ENCODE measurements at regions of chr15 and their contacts with region 1.

Region 1: GRCh38 chr15:66851226-66852071 is 149.4 kb downstream of the SMAD6 start:
- DNase-seq: peak; percentile 70
- ATAC-seq: peak; percentile 96
- H3K4me3 ChIP-seq: no peak overlapping the region
- H3K27ac ChIP-seq: peak overlapping the region; percentile 51
- H3K4me1 ChIP-seq: peaks cover 11% of the 10 kb centered on the region
- H3K27me3 ChIP-seq: no peaks in the 10 kb centered on the region
- CTCF ChIP-seq: peak; percentile 90
- POLR2A ChIP-seq: no peak
- RAD21 ChIP-seq: peak; percentile 92

Region 2: DNA sequence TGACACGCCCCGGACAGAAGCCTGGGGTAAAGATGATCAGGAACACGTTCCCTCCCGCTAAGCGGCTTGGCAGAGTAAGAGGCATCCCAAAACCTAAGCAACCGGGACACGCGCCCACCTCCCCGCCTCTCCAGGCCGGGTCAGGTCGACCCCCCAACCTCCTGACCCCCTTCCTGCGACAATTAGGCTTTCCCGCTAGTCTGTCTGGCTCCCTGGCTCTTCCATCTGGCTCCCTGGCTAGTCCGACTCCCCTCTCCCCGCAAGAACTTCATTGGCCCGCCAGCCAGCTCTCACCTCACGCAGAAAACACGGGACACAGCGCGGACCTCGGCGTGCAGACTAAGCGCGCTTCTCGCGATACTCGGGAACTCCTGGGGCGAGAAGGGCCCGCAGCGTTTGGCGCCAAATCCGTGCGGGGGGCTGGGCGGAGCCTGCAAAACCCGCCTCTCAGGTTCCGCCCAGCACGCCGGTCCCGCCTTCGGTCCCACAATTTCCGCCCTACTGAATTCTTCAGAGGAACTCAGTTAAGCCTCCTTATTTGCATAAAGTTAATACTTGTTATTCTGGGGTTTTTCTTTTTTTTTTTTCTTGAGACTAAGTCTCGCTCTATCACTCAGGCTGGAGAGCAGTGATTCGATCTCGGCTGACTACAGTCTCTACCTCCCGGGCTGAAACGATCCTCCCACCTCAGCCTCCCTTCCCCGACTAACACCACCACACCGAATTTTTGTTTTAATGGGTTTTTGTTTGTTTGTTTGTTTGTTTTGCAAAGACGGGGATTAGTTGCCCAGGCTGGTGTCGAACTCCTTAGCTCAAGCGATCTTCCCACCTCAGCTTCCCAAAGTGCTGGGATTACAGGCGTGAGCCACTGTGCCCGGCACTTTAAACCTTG is 494.9 kb before region 1 on chr15 and contains the start of gene TIPIN:
- CTCF ChIA-PET with region 1: no interaction called
- POLR2A ChIA-PET with region 1: no interaction called
- dilution Hi-C with region 1: no loop called
- in situ Hi-C with region 1: loop called (anchors 25 kb)
- intact Hi-C with region 1: no loop called
- DNase-seq: peak; percentile 95
- ATAC-seq: peak; percentile 99
- H3K4me3 ChIP-seq: peak within 1 kb of the TSS; percentile 57
- H3K27ac ChIP-seq: peak within 1 kb of the TSS; percentile 56
- H3K4me1 ChIP-seq: 0 out of 2 replicates have a peak, but pooled peaks cover 1% of the 10 kb centered on the region
- H3K27me3 ChIP-seq: no peaks in the 10 kb centered on the region
- CTCF ChIP-seq: no peak
- POLR2A ChIP-seq: peak; percentile 46; the same call in 1 of the 2 replicates
- RAD21 ChIP-seq: no peak
- total RNA-seq, gene TIPIN: 7.3 and 15.0 TPM in 2 replicates

Region 3: DNA sequence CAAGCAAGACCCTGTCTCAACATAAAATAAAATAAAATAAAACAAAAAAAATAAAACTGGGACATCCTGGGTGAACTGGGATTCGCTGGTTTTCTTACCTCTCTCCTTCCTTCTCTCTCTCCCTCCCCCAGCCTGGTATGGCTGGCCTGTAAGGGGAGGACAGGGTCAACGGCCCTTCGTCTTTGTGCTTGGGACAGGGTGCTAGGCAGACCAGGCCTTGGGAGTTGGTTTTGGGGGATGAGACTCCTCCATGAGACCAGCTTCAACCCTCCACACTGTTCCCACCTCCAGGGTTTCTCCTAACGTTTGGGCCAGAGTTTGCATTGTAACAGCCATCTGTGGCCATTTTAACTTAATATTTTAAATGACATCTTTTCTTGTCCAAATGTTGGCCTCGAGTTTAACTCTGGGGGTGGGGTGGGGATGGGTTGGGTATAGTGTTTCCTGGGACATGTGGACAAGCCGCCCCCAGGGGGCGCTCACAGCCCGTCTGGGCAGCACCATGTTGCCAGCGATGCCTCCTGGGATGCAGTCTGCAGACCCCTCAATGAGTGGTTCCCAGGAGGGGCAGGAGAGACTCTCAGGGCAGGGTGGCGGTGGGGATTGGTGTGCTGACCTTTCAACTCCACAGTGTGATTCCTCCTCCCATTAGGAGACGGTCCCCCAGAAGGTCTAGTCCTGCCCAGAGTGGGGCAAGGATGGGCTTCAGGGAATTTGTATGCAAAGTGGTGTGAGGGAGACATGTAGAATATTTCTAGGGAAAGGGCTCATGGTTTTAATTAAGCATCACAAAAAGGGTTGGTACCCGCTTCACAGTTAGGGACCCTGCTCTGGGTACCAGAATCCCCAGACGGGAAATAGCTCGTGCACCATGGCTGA is 247.9 kb before region 1 on chr15:
- CTCF ChIA-PET with region 1: interaction called, 3 read pairs
- POLR2A ChIA-PET with region 1: no interaction called
- dilution Hi-C with region 1: no loop called
- in situ Hi-C with region 1: no loop called
- intact Hi-C with region 1: loop called (anchors 1 kb)
- DNase-seq: peak; percentile 62
- ATAC-seq: peak; percentile 99
- H3K4me3 ChIP-seq: no peak overlapping the region
- H3K27ac ChIP-seq: no peak overlapping the region
- H3K4me1 ChIP-seq: no peaks in the 10 kb centered on the region
- H3K27me3 ChIP-seq: peaks cover 19% of the 10 kb centered on the region
- CTCF ChIP-seq: peak; percentile 93
- POLR2A ChIP-seq: no peak
- RAD21 ChIP-seq: peak; percentile 94

Region 4: GRCh38 chr15:66700802-66701421 is 150.5 kb before region 1 on chr15:
- CTCF ChIA-PET with region 1: interaction called, 17 read pairs
- POLR2A ChIA-PET with region 1: no interaction called
- dilution Hi-C with region 1: no loop called
- in situ Hi-C with region 1: loop called (anchors 25 kb)
- intact Hi-C with region 1: loop called (anchors 1 kb)
- DNase-seq: peak; percentile 91
- ATAC-seq: peak; percentile 80
- H3K4me3 ChIP-seq: peak overlapping the region; percentile 68
- H3K27ac ChIP-seq: peak overlapping the region; percentile 90
- H3K4me1 ChIP-seq: peaks cover 9% of the 10 kb centered on the region
- H3K27me3 ChIP-seq: no peaks in the 10 kb centered on the region
- CTCF ChIP-seq: no peak
- POLR2A ChIP-seq: no peak; the same call in 1 of the 2 replicates
- RAD21 ChIP-seq: no peak

Region 5: DNA sequence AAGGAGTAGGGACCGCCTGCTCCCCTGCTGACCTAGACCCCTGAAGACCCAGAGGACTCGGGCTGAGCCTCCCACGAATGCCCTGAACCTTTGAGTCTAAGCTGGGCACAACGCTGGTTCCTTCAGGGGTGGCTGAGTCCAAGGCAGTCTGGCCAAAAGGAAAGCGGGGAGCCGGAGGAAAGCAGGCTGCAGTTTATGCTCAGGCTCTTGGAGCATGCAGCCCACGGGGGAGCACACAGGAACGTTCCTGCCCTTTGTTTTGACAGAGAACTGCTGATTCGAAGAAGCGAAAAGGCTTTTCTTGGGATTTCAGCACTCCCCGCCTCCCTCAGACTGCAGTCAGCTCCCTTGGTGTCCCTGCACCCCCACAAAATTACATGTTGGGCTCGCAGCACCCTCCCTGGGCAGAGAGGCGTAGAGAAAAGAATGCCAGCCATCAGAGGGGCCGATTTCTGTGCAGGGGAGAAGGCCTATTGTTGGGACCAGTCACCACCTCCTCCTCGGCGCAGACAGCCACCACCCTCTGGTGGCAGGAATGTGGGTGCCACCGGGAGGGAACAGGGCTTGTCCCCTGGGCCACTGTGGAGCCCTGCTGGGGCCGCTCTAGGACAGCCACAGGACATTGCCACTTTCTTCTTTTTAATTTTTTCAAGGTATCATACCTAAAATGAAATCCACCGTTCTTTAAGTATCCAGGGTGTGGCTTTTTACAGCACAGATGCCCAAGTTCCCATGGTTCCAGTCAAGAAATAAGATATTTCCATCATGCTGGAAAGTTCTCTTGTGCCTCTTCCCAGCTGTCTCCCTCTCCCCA is 77.2 kb before region 1 on chr15:
- CTCF ChIA-PET with region 1: interaction called, 11 read pairs
- POLR2A ChIA-PET with region 1: no interaction called
- dilution Hi-C with region 1: no loop called
- in situ Hi-C with region 1: no loop called
- intact Hi-C with region 1: loop called (anchors 5 kb)
- DNase-seq: peak; percentile 64
- ATAC-seq: peak; percentile 79
- H3K4me3 ChIP-seq: no peak overlapping the region
- H3K27ac ChIP-seq: peak overlapping the region; percentile 61
- H3K4me1 ChIP-seq: peaks cover 49% of the 10 kb centered on the region
- H3K27me3 ChIP-seq: no peaks in the 10 kb centered on the region
- CTCF ChIP-seq: peak; percentile 98
- POLR2A ChIP-seq: no peak
- RAD21 ChIP-seq: peak; percentile 90

Region 6: GRCh38 chr15:66815322-66815721 is 36.1 kb before region 1 on chr15:
- CTCF ChIA-PET with region 1: interaction called, 3 read pairs
- POLR2A ChIA-PET with region 1: no interaction called
- dilution Hi-C with region 1: no loop called
- in situ Hi-C with region 1: no loop called
- intact Hi-C with region 1: loop called (anchors 1 kb)
- DNase-seq: peak; percentile 94
- ATAC-seq: peak; percentile 94
- H3K4me3 ChIP-seq: no peak overlapping the region
- H3K27ac ChIP-seq: peak overlapping the region; percentile 5; the same call in 1 of the 2 replicates
- H3K4me1 ChIP-seq: peaks cover 2% of the 10 kb centered on the region; the same call in 1 of the 2 replicates
- H3K27me3 ChIP-seq: no peaks in the 10 kb centered on the region
- CTCF ChIP-seq: no peak
- POLR2A ChIP-seq: no peak
- RAD21 ChIP-seq: peak; percentile 40

Region 7: DNA sequence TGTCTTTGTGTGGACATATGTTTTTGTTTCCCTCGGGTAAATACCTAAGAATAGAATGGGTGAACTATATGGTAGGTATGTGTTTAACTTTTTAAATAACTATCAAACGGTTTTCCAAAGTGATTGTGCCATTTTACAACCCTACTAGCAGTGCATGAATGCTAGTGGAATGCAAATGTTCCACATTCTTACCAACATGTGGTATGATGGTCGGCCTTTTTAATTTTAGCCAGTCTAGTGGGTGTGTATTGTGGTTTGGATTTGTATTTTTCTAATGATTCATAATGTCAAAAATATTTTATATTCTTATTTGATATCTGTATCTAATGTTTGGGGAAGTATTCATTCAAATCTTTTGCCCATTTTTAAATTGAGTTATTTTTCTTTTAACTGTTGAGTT is 145.8 kb after region 1 on chr15:
- CTCF ChIA-PET with region 1: no interaction called
- POLR2A ChIA-PET with region 1: no interaction called
- dilution Hi-C with region 1: no loop called
- in situ Hi-C with region 1: no loop called
- intact Hi-C with region 1: no loop called
- DNase-seq: peak; percentile 80
- ATAC-seq: peak; percentile 89
- H3K4me3 ChIP-seq: no peak overlapping the region
- H3K27ac ChIP-seq: no peak overlapping the region
- H3K4me1 ChIP-seq: peaks cover 3% of the 10 kb centered on the region
- H3K27me3 ChIP-seq: 0 out of 2 replicates have a peak, but pooled peaks cover 1% of the 10 kb centered on the region
- CTCF ChIP-seq: no peak
- POLR2A ChIP-seq: no peak
- RAD21 ChIP-seq: peak; percentile 7; the same call in 1 of the 2 replicates

Region 8: GRCh38 chr15:67107014-67107812 is 255.8 kb after region 1 on chr15:
- CTCF ChIA-PET with region 1: no interaction called
- POLR2A ChIA-PET with region 1: no interaction called
- dilution Hi-C with region 1: no loop called
- in situ Hi-C with region 1: no loop called
- intact Hi-C with region 1: no loop called
- DNase-seq: peak; percentile 100
- ATAC-seq: peak; percentile 49
- H3K4me3 ChIP-seq: no peak overlapping the region
- H3K27ac ChIP-seq: peak overlapping the region; percentile 97
- H3K4me1 ChIP-seq: peaks cover 65% of the 10 kb centered on the region
- H3K27me3 ChIP-seq: no peaks in the 10 kb centered on the region
- CTCF ChIP-seq: no peak
- POLR2A ChIP-seq: peak; percentile 26; the same call in 1 of the 2 replicates
- RAD21 ChIP-seq: peak; percentile 30